Left cardiac atrium (tissue), 4 donors: ENCODE measurements at regions of chrX and their contacts with region 1.

Region 1: GRCh38 chrX:112211459-112211858 is 128.9 kb upstream of the TRPC5 start:
- DNase-seq: no peak
- ATAC-seq: no peak

Region 2: GRCh38 chrX:112179361-112179760 is 32.1 kb before region 1 on chrX:
- intact Hi-C with region 1: loop called in 1 of 2 experiments (anchors 1 kb)
- DNase-seq: no peak
- ATAC-seq: no peak